ENCODE measurements at regions of chr7 and their contacts with region 1.

Region 1: GRCh38 chr7:44606450-44607254 is at the start of gene OGDH:
- DNase-seq: peak; percentile 98 to 100 (median 99)

Region 2: GRCh38 chr7:44748045-44748947 is 141.6 kb after region 1 on chr7 and contains the start of gene ZMIZ2:
- intact Hi-C with region 1: loop called (anchors 2 kb)
- DNase-seq: peak; percentile 81 to 99 (median 97)